ENCODE measurements at regions of chr6 and their contacts with region 1.

Region 1: DNA sequence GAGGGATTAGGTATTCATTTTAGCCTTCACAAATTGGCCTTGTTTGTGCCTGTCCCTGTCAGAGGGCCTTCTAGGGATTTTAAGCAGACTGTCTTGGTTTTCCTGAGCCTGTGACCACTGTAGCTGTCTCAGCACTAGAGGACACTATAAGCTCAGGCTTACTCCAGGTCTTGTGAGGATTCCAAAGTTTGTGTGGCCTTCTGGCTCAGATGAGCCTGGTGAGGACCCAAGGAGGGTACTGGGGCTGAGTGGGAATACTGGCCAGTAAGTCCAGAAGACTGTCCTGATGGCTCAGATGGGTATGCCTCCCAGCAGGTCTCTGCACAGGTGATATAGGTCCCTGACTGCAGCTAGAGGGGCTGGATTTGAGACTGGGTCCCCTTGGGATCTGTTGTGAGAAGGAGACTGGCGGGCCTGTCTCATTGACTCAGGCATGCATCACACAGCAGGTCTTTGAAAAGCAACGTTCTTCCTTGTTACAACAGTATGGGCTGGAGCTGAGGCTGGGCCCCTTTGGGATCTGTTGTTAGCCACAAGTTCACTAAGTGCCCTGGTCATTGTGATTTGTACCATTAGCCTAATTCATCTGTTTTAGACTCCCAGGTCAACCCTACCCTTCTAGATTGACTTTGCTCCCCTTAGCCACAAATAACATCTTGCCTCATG is 26.3 kb upstream of the TFB1M start:
- DNase-seq: no peak
- ATAC-seq: peak; percentile 64
- H3K4me3 ChIP-seq: no peak overlapping the region
- H3K27ac ChIP-seq: peak overlapping the region; percentile 67
- H3K4me1 ChIP-seq: peaks cover 17% of the 10 kb centered on the region
- H3K27me3 ChIP-seq: no peaks in the 10 kb centered on the region
- CTCF ChIP-seq: peak in 2 of 3 experiments; percentile 14 to 26; a peak in 2 of 6 replicates
- EP300 ChIP-seq: no peak
- POLR2A ChIP-seq: no peak
- RAD21 ChIP-seq: peak; percentile 56

Region 2: GRCh38 chr6:155351273-155352129 is 10.9 kb after region 1 on chr6:
- CTCF ChIA-PET with region 1: interaction called, 9 read pairs
- POLR2A ChIA-PET with region 1: no interaction called
- RAD21 ChIA-PET with region 1: no interaction called
- SMC1A ChIA-PET with region 1: interaction called, 26 read pairs
- in situ Hi-C with region 1: no loop called
- intact Hi-C with region 1: no loop called
- DNase-seq: peak; percentile 94
- ATAC-seq: peak; percentile 94
- H3K4me3 ChIP-seq: no peak overlapping the region
- H3K27ac ChIP-seq: peak overlapping the region; percentile 81
- H3K4me1 ChIP-seq: peaks cover 47% of the 10 kb centered on the region
- H3K27me3 ChIP-seq: no peaks in the 10 kb centered on the region
- CTCF ChIP-seq: no peak
- EP300 ChIP-seq: peak; percentile 94 to 98
- POLR2A ChIP-seq: no peak
- RAD21 ChIP-seq: peak; percentile 24; the same call in 1 of the 2 replicates